ENCODE measurements at regions of chr5 and their contacts with region 1.

Region 1: DNA sequence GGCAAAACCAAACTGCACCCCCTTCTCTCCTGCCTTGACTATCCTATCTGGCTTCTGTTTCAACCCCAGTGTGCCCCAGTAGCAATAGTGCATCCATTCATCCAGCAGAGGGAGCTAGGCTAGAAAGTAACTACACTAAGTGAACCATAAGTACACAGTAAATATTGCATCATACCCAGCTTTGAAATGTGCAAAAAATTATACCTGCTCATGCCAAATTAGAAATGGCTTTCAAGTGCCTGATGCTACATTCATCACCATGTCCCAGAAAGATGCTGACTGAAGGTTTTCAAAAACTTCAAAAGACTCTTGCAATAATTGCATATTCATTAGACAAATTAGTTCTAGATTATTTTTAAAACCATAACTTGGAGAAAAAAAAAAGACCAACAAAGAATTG is 153.5 kb downstream of the PRELID2 start:
- DNase-seq: peak; percentile 51
- H3K4me3 ChIP-seq: peak overlapping the region in 1 of 2 experiments; percentile 14; a peak in 1 of 4 replicates
- H3K27ac ChIP-seq: no peak overlapping the region
- H3K4me1 ChIP-seq: peaks cover 0 to 5% of the 10 kb centered on the region in 2 experiments; a peak in 2 of 4 replicates
- H3K27me3 ChIP-seq: no peaks in the 10 kb centered on the region
- CTCF ChIP-seq: peak; percentile 79
- EP300 ChIP-seq: no peak
- RAD21 ChIP-seq: peak; percentile 68

Region 2: DNA sequence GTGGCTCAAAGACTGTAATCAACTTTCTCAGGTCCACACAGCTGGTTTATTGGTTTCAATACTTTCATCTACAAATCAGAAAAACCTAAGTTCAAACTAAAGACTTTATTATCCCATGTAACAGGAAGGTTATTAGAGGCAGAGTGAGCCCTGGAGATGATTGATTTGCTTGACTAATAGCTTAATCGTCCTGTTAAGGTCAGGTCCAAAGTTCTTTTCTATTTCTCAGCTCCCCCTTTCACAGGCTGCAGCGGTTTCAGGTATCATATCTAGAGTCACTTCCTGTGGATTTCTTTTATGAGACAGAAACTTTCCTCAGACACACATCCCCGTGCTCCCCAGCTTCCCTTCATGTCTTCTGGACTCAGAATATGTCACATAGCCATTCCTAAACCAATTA is 13.0 kb before region 1 on chr5:
- CTCF ChIA-PET with region 1: interaction called, 13 read pairs
- POLR2A ChIA-PET with region 1: no interaction called
- DNase-seq: no peak
- H3K4me3 ChIP-seq: no peak overlapping the region
- H3K27ac ChIP-seq: no peak overlapping the region
- H3K4me1 ChIP-seq: no peaks in the 10 kb centered on the region
- H3K27me3 ChIP-seq: no peaks in the 10 kb centered on the region
- CTCF ChIP-seq: no peak
- EP300 ChIP-seq: no peak
- RAD21 ChIP-seq: no peak

Region 3: DNA sequence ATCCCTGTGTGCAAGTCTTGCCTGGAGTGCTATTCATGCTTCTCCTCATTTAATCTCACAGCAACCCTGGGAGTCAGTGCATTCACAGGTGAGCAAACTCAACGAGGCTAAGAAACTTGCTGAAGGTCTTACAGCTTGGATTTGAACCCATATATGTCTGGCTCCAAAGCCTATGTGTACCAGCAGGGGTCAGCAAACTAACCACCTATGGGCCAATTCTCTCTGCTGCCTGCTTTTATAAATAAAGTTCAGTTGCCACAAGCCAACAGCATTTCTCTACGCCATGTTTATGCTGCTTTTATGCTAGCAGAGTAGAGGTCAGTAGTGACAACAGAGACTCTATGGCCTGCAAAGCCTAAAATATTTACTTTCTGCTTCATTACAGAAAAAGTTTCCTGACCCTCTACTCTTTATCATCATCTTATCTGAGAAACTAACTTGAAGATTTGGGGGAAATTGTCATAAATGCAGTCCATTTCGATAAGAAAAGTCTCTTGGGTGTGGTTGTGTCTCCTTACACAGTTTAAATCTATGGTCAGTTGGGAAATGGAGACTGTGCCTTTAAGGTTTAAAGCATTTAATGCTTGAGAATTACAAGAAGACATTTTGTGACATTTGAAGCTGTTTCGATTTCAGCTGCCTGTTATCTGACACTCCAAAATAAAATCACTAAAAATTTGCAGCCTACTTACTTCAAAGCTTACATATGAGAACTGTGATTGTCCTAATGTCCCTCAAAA is 15.7 kb after region 1 on chr5:
- CTCF ChIA-PET with region 1: interaction called, 11 read pairs
- POLR2A ChIA-PET with region 1: no interaction called
- DNase-seq: peak; percentile 24
- H3K4me3 ChIP-seq: no peak overlapping the region; a peak in 1 of 4 replicates
- H3K27ac ChIP-seq: no peak overlapping the region
- H3K4me1 ChIP-seq: no peaks in the 10 kb centered on the region
- H3K27me3 ChIP-seq: no peaks in the 10 kb centered on the region
- CTCF ChIP-seq: peak; percentile 59
- EP300 ChIP-seq: no peak
- RAD21 ChIP-seq: peak; percentile 56

Region 4: GRCh38 chr5:145834917-145835847 is 153.5 kb after region 1 on chr5 and contains the start of gene PRELID2:
- CTCF ChIA-PET with region 1: interaction called, 12 read pairs
- POLR2A ChIA-PET with region 1: no interaction called
- DNase-seq: peak; percentile 89
- H3K4me3 ChIP-seq: peak within 1 kb of the TSS; percentile 70 to 71
- H3K27ac ChIP-seq: peak within 1 kb of the TSS; percentile 56 to 58
- H3K4me1 ChIP-seq: peaks cover 12 to 18% of the 10 kb centered on the region in 2 experiments
- H3K27me3 ChIP-seq: no peaks in the 10 kb centered on the region
- CTCF ChIP-seq: peak; percentile 35; the same call in 1 of the 2 replicates
- EP300 ChIP-seq: no peak
- RAD21 ChIP-seq: no peak
- polyA plus RNA-seq, gene PRELID2: 3.8 and 5.3 TPM in 2 replicates